ENCODE measurements at regions of chr14 and their contacts with region 1.

Region 1: GRCh38 chr14:101604935-101605780 is 43.9 kb downstream of the DIO3 start:
- DNase-seq: no peak
- H3K4me3 ChIP-seq: no peak overlapping the region
- H3K27ac ChIP-seq: no peak overlapping the region
- H3K4me1 ChIP-seq: no peaks in the 10 kb centered on the region
- H3K27me3 ChIP-seq: peaks cover 16% of the 10 kb centered on the region; the same call in 1 of the 2 replicates
- CTCF ChIP-seq: no peak

Region 2: GRCh38 chr14:101585211-101585610 is 19.9 kb before region 1 on chr14:
- CTCF ChIA-PET with region 1: no interaction called
- POLR2A ChIA-PET with region 1: interaction called, 18 read pairs
- intact Hi-C with region 1: no loop called
- DNase-seq: no peak
- H3K4me3 ChIP-seq: no peak overlapping the region
- H3K27ac ChIP-seq: no peak overlapping the region
- H3K4me1 ChIP-seq: no peaks in the 10 kb centered on the region
- H3K27me3 ChIP-seq: peaks cover 29% of the 10 kb centered on the region
- CTCF ChIP-seq: no peak

Region 3: GRCh38 chr14:101643651-101644050 is 38.5 kb after region 1 on chr14:
- CTCF ChIA-PET with region 1: no interaction called
- POLR2A ChIA-PET with region 1: no interaction called
- intact Hi-C with region 1: loop called (anchors 2 kb)
- DNase-seq: no peak
- H3K4me3 ChIP-seq: no peak overlapping the region
- H3K27ac ChIP-seq: no peak overlapping the region
- H3K4me1 ChIP-seq: no peaks in the 10 kb centered on the region
- H3K27me3 ChIP-seq: no peaks in the 10 kb centered on the region
- CTCF ChIP-seq: no peak

Region 4: DNA sequence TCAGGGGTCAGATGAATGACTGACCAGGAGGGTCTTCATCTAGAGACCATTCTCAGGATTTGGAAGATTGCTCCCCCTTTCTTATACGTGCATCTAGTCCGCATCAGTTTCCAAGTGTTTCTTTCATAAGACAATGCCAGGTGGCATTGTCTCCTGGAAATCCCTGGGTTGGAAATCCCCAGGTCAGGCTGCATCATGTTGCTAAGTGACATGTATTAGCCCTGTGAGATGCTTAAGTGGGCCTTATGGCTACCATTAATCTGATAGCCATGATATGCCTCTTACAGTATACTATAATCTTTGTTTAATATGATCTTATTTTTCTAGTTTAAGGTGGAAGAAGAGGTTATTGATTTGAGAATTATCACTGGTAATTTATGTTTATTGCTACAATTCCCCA is 48.9 kb after region 1 on chr14:
- CTCF ChIA-PET with region 1: no interaction called
- POLR2A ChIA-PET with region 1: no interaction called
- intact Hi-C with region 1: no loop called
- DNase-seq: no peak
- H3K4me3 ChIP-seq: no peak overlapping the region
- H3K27ac ChIP-seq: no peak overlapping the region
- H3K4me1 ChIP-seq: no peaks in the 10 kb centered on the region; the same call in 1 of the 2 replicates
- H3K27me3 ChIP-seq: no peaks in the 10 kb centered on the region
- CTCF ChIP-seq: no peak